Esophagus muscularis mucosa (tissue), 4 donors: ENCODE measurements at regions of chr5 and their contacts with region 1.

Region 1: DNA sequence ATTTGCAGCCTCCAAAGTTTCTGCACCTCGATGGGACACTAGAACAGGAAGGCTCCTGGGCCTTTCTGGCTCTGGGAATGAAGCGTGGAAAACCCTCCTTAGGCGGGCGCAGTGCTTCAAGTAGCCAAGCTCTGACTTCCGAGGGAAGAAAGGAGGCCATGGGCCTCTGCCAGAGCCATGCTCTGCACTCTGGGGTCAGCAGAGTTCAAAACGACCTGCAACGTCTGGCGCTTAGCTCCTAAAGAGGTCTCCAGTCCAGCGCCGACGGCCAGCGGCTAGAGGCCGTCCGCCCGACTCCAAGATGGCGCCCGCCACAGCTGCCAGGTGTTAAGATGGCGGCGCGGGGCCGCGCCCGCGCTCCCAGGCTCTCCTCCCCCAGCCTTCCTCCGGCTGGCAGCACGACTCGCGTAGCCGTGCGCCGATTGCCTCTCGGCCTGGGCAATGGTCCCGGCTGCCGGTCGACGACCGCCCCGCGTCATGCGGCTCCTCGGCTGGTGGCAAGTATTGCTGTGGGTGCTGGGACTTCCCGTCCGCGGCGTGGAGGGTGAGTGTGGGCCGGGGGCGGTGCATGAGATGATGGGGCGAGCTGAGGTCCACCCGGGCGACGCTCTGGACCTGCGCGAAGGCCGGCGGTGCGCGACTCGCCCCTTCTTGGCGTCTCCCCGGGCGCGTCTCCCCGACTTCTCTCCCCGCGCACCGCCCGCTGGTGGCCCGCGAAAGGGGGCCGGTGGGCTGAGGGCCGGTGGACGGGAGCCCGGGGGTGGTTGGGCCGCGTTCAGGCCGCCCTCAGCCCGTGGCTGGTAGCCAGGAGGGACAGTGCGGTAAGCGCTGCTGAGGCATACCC is at the start of gene TXNDC15:
- DNase-seq: peak; percentile 94
- H3K4me3 ChIP-seq: peak within 1 kb of the TSS; percentile 83 to 99 (median 98)
- H3K27ac ChIP-seq: peak within 1 kb of the TSS; percentile 94 to 99 (median 98)
- H3K4me1 ChIP-seq: peaks cover 17 to 43% (median 32%) of the 10 kb centered on the region in 4 donors
- H3K27me3 ChIP-seq: no peaks in the 10 kb centered on the region
- CTCF ChIP-seq: no peak
- EP300 ChIP-seq: no peak
- POLR2A ChIP-seq: no peak
- total RNA-seq, gene TXNDC15: 71.4 to 123 (median 93.9) TPM

Region 2: DNA sequence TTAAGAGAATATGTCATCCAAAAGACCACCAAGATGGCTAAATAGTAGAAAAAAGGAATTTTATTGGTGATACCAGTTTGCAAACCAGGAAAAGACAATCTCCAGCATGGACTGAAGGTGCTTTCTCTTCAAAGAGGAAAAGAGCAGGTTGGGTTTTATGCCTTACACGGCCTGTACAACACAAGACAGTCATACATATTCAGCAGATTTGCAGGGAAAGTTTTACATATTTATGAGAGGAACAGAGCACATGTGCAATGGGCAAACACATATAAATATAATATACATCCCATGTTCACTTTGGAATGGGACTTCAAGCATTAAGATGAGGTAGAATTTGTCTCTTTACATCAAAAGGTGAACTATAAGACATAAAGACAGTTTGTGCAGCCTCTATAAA is 578.0 kb before region 1 on chr5:
- intact Hi-C with region 1: no loop called
- DNase-seq: no peak
- H3K4me3 ChIP-seq: no peak overlapping the region
- H3K27ac ChIP-seq: no peak overlapping the region
- H3K4me1 ChIP-seq: peaks cover 0 to 4% (median 0%) of the 10 kb centered on the region in 4 donors
- H3K27me3 ChIP-seq: no peaks in the 10 kb centered on the region
- CTCF ChIP-seq: no peak
- EP300 ChIP-seq: no peak
- POLR2A ChIP-seq: no peak

Region 3: DNA sequence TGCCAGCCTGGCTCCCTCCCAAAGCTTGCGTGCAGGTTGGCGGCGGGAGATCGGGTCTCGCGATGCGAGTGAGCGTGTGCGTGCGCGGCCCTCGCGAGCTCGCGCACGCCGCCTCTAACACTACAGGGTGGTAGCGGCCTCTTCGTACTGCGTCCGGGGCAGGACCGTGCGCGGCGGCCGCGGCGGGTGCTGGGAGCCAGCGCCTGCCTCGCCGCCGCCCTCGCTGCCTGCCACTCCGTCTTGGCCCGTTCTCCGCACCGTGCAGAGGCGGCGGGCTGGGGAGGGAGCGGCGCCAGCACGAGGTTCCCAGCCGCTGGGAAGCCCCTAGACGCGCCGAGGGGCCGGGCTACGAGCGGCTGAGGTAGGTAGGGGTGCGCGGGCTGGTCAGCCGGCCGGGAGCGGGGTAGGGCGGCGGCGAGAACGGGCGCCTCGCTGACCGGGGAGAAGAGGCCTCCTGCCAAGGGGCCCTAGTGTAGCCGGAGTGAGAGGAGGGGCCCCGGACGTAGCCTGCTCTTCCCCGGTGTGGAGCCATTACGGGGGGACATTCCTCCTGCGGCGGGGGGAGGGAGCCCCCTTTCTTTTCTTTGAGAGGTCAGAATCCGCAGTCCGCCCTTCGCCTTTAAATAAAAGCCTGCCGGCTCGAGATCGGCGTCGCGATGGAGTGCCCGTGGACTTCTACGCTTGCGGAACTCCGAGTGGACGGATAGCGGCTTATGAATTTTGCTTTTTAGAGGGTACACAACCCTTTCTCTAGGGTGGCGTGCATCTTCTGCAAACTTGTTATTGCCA is 28.2 kb before region 1 on chr5 and contains the start of gene C5orf24:
- intact Hi-C with region 1: loop called (anchors 2 kb)
- DNase-seq: peak; percentile 96
- H3K4me3 ChIP-seq: peak within 1 kb of the TSS; percentile 82 to 97 (median 92)
- H3K27ac ChIP-seq: peak within 1 kb of the TSS; percentile 95 to 99 (median 97)
- H3K4me1 ChIP-seq: peaks cover 40 to 54% (median 51%) of the 10 kb centered on the region in 4 donors
- H3K27me3 ChIP-seq: no peaks in the 10 kb centered on the region
- CTCF ChIP-seq: peak in 1 of 3 experiments; percentile 15
- EP300 ChIP-seq: no peak
- POLR2A ChIP-seq: peak; percentile 74
- total RNA-seq, gene C5orf24: 54.0 to 76.4 (median 61.6) TPM

Region 4: DNA sequence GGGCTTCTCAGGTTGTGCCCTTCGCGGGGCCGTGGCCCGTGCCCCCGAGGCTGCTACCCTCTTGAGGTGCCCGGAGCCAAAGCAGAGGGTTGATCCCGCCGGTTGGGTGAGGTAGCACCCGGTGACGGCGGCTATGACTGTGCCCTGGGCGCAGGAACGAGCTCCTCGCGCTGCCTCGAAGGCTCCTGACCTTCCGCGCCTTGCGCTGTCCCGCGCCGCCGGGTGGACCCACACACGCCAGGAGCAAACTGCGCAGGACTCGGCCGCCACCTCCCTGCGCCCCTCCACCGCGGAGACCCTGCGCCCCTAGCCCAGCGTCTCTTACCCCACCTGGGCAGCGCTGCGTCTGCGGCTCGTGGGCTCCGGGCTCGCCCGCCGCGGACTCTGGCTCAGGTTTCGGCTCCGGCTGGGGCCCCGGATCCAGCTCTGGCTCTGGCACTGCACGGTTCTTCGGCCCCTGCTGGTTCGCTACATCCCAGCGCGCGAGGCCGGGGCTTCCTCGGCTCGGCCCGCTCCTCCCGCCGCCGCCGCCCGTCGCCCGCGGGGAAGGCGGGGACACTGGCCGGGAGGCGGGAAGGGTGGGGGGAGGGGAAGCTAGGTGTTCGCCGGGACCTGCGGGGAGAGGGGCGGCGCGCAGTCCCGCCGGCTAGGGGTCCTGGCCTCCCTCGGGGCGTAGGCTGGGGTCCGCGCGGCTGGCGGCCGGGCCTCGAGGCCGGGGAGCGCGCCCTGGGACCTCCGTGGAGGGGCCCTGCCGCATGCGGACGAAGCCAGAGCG is 165.2 kb after region 1 on chr5:
- intact Hi-C with region 1: no loop called
- DNase-seq: no peak
- H3K4me3 ChIP-seq: peak overlapping the region; percentile 34 to 56 (median 46)
- H3K27ac ChIP-seq: peak overlapping the region in 1 of 4 donors; percentile 57
- H3K4me1 ChIP-seq: peaks cover 16 to 32% (median 29%) of the 10 kb centered on the region in 4 donors
- H3K27me3 ChIP-seq: peaks cover 8 to 100% (median 49%) of the 10 kb centered on the region in 4 donors
- CTCF ChIP-seq: no peak
- EP300 ChIP-seq: no peak
- POLR2A ChIP-seq: no peak

Region 5: GRCh38 chr5:136723806-136724583 is 1849.8 kb after region 1 on chr5:
- intact Hi-C with region 1: no loop called
- DNase-seq: no peak
- H3K4me3 ChIP-seq: no peak overlapping the region
- H3K27ac ChIP-seq: no peak overlapping the region
- H3K4me1 ChIP-seq: no peaks in the 10 kb centered on the region
- H3K27me3 ChIP-seq: no peaks in the 10 kb centered on the region
- CTCF ChIP-seq: no peak
- EP300 ChIP-seq: no peak
- POLR2A ChIP-seq: no peak